Heart left ventricle (tissue), 16 donors: ENCODE measurements at regions of chr14 and their contacts with region 1.

Region 1: GRCh38 chr14:52146504-52146903 is 77.6 kb upstream of the NID2 start:
- DNase-seq: no peak
- ATAC-seq: no peak
- H3K4me3 ChIP-seq: no peak overlapping the region
- H3K27ac ChIP-seq: no peak overlapping the region
- H3K4me1 ChIP-seq: no peaks in the 10 kb centered on the region
- H3K27me3 ChIP-seq: no peaks in the 10 kb centered on the region
- CTCF ChIP-seq: peak in 4 of 12 donors; percentile 6 to 33 (median 9)
- POLR2A ChIP-seq: no peak

Region 2: DNA sequence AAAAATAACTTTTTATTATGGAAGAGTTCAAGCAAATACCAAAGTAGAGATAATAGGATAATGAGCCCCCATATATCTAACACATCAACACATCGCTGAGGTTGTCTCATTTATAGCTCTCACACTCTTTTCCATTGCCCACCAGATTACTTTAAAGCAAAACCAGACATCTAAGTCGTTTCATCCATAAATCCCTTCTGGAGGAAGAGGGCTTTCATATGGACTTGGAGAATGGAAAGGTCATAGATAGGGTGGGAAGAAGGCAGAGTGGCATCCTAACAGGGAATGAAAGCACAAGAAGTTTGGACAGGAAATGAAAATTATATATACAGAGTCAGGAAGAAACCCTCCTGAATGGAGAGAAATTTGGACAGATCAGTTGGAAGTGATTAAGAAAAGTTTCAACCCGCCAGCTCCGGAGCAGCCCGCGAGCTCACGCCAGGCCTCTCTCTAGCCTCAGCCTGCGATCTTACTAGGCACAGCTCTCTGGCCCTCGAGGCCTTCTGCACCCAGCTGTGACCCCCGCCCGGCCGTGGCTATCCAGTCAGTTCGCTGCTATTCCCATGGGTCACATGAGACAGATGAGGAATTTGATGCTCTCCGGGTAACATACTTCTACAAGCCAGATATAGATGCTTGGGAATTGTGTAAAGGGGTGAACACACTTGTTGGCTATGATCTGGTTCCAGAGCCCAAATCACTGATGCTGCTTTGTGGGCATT is 29.2 kb before region 1 on chr14:
- intact Hi-C with region 1: no loop called
- DNase-seq: peak in 3 of 5 donors; percentile 38 to 64 (median 61)
- ATAC-seq: peak in 1 of 4 donors; percentile 55
- H3K4me3 ChIP-seq: no peak overlapping the region
- H3K27ac ChIP-seq: peak overlapping the region in 2 of 12 donors; percentile 5 to 38
- H3K4me1 ChIP-seq: no peaks in the 10 kb centered on the region
- H3K27me3 ChIP-seq: no peaks in the 10 kb centered on the region
- CTCF ChIP-seq: no peak
- POLR2A ChIP-seq: no peak

Region 3: GRCh38 chr14:52267501-52268278 is 121.2 kb after region 1 on chr14 and contains the start of gene PTGDR:
- intact Hi-C with region 1: loop called in 1 of 10 experiments (anchors 10 kb)
- DNase-seq: peak; percentile 38 to 71 (median 47)
- ATAC-seq: peak; percentile 33 to 81 (median 62)
- H3K4me3 ChIP-seq: peak within 1 kb of the TSS; percentile 36 to 75 (median 58)
- H3K27ac ChIP-seq: peak within 1 kb of the TSS in 10 of 12 donors; percentile 11 to 78 (median 59)
- H3K4me1 ChIP-seq: peaks cover 0 to 43% (median 18%) of the 10 kb centered on the region in 12 donors
- H3K27me3 ChIP-seq: peaks cover 0 to 38% (median 9%) of the 10 kb centered on the region in 9 donors
- CTCF ChIP-seq: no peak
- POLR2A ChIP-seq: no peak
- total RNA-seq, gene PTGDR: 0.35 to 2.5 (median 1.3) TPM